Keratinocyte (primary cell): ENCODE measurements at regions of chr16 and their contacts with region 1.

Region 1: DNA sequence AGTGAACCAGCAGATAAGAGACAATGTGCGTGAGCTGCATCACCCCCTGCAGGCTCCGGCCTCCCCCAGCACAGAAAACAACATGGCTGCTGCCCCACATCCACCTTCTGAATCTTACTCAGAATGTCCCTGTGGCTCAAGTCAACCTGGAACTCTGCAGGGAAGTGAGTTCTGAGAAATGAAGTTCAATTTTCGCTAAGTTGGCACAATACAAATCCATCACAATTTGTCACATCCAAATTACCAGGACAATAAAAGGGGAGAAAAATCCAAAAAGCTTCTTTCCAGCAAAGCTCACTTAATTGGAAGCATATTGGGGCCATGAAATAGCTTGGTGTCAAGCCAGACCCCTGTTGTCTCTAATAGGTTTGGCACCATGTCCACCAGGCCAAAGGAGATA is 38.1 kb downstream of the CLEC19A start:
- DNase-seq: no peak
- H3K4me3 ChIP-seq: no peak overlapping the region
- H3K27ac ChIP-seq: no peak overlapping the region
- H3K4me1 ChIP-seq: no peaks in the 10 kb centered on the region
- H3K27me3 ChIP-seq: no peaks in the 10 kb centered on the region
- CTCF ChIP-seq: no peak

Region 2: DNA sequence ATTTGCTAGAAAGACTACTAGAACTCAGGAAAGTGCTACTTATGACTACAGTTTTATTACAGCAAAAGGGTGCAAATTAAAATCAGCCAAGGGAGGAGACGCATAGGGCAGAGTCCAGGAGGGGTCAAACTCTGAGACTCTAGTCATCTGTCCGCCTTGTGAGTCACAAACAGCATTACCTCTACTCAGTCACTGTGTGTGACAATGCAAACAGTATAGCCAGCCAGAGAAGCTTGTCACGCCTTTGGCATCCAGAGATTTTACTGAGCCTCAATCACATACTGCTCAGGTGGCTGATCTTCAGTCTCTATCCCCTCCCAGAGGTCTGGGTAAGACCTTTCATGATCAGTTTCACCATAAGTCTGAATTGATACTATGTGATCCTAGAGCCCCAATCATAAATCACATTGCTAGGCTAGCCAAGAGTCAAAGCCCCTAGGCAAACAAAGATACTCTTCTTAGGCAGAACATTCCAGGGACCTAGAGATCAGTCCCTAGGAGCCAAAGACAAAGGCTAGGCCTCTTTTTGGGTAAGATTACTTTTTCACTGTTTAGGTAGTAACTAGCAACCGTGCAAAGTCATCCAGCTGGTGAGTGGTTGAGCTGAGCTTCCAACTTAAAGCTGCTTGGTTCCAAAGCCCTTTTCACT is 86.9 kb before region 1 on chr16:
- dilution Hi-C with region 1: loop called (anchors 5 kb)
- DNase-seq: no peak
- H3K4me3 ChIP-seq: no peak overlapping the region
- H3K27ac ChIP-seq: no peak overlapping the region
- H3K4me1 ChIP-seq: no peaks in the 10 kb centered on the region
- H3K27me3 ChIP-seq: no peaks in the 10 kb centered on the region
- CTCF ChIP-seq: no peak